A673 (cell line): ENCODE measurements at regions of chr9 and their contacts with region 1.

Region 1: DNA sequence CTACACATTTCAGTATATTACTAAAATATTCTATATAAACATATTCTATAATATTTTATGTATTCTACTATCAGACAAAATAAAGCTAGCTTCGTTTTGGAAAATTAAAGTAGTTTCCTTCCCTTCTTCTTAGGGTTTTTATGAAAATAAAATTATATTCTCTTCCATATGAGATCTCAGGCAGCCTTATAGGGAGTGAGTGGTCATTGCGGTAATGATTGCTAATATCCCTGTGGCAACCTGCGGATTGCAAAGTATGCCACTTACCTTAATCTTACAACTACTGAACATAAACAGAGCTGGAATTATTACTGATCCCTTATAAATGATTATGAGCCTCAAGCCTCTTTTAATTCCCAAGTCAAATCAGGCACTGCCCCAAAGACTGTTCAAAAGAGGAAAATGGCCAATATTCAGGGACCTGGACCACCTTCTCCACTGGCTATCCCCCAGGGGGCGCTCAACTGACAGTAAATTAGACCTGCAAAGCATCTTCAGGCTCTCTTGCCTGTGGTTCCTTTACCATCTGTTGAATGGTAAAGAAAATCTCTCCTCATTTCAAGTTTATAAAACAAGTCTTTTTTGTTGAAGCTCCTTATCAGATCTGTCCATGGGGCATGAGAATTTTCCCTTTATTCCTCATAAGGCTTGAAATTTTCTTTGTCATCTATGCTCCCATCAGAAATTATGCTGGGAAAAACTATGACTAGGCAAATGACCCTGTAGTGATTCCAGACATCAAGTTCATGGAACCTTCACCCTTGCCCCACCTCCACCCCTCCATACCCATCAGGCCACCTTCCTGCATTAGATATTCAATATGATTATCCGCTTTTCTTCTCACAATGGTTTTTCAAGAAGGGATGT is 163.9 kb downstream of the CEMIP2 start:
- DNase-seq: peak; percentile 71
- H3K4me3 ChIP-seq: no peak overlapping the region
- H3K27ac ChIP-seq: no peak overlapping the region
- H3K4me1 ChIP-seq: no peaks in the 10 kb centered on the region
- H3K27me3 ChIP-seq: no peaks in the 10 kb centered on the region
- CTCF ChIP-seq: peak; percentile 87

Region 2: DNA sequence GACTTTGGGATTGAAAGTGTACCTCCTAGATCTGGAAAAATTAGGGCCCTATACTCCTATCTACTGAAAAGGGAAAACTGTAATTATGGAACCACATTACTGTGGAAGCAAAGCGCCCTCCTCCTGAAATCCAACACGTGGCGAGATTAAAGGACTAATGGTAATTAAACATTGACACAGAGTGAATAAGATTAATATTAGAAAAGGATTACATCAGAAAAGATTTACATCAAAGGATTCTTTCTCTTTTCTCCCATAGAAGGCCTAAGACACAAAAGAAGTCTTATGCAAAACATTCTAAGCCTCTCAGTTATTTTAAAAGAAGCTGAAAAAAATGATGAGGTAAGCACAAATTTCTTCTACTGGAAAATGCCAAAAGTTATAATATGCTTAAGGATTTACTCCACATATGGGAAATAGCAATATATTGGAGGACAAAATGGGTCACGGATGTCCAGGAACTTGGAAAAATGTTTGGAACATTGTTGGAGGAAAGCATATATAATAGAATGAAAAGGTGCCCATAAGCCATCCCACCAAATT is 710.8 kb before region 1 on chr9:
- CTCF ChIA-PET with region 1: no interaction called
- POLR2A ChIA-PET with region 1: no interaction called
- intact Hi-C with region 1: no loop called
- DNase-seq: no peak
- H3K4me3 ChIP-seq: no peak overlapping the region
- H3K27ac ChIP-seq: no peak overlapping the region
- H3K4me1 ChIP-seq: no peaks in the 10 kb centered on the region
- H3K27me3 ChIP-seq: no peaks in the 10 kb centered on the region
- CTCF ChIP-seq: no peak

Region 3: DNA sequence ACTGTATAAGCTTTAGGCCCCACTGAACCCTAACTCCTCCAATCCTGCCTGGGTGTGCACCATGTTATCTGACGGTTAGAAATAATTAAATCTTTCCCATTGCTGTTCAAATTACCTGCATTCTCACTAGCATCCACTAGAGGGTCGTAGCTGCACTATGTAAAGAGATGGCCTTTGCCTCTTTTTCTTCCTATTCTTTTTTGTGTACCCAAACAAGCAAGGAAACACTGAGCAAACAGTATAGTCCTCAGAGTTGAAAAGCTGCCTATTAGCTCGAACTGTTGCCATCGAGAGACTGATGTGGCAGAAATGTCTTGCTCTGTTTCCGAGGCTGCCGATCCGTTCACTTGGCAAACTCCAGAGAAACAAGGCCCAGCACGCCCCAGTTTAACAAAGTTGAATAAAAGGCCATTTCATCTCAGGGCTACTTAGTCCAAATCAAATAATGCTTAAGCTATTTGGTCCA is 319.2 kb before region 1 on chr9:
- CTCF ChIA-PET with region 1: no interaction called
- POLR2A ChIA-PET with region 1: no interaction called
- intact Hi-C with region 1: loop called (anchors 5 kb)
- DNase-seq: peak; percentile 72
- H3K4me3 ChIP-seq: no peak overlapping the region
- H3K27ac ChIP-seq: no peak overlapping the region
- H3K4me1 ChIP-seq: no peaks in the 10 kb centered on the region
- H3K27me3 ChIP-seq: no peaks in the 10 kb centered on the region
- CTCF ChIP-seq: peak; percentile 80

Region 4: GRCh38 chr9:71353720-71354119 is 250.7 kb before region 1 on chr9:
- CTCF ChIA-PET with region 1: no interaction called
- POLR2A ChIA-PET with region 1: no interaction called
- intact Hi-C with region 1: no loop called
- DNase-seq: no peak
- H3K4me3 ChIP-seq: no peak overlapping the region
- H3K27ac ChIP-seq: no peak overlapping the region
- H3K4me1 ChIP-seq: no peaks in the 10 kb centered on the region
- H3K27me3 ChIP-seq: no peaks in the 10 kb centered on the region
- CTCF ChIP-seq: no peak

Region 5: DNA sequence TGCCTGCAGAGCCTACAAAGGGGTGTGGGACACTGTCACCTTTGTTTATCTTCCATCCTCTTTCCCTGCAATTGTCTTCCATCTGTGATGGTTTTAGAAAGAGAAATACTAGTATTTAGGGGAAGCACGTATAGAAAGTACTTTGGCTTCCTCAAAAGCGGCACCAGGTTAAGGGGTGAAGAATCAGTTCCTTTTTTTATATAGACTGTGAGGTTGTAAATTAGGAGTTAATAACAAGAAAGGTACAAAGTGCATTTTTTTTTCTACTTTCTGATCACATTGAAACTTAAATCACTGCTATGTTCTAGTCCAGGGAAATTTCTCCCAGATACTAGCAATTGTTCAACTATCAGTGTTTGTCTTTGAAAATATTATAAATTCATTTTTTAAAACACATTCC is 55.4 kb before region 1 on chr9:
- CTCF ChIA-PET with region 1: no interaction called
- POLR2A ChIA-PET with region 1: no interaction called
- intact Hi-C with region 1: no loop called
- DNase-seq: no peak
- H3K4me3 ChIP-seq: no peak overlapping the region
- H3K27ac ChIP-seq: no peak overlapping the region
- H3K4me1 ChIP-seq: no peaks in the 10 kb centered on the region
- H3K27me3 ChIP-seq: peaks cover 62% of the 10 kb centered on the region
- CTCF ChIP-seq: no peak

Region 6: DNA sequence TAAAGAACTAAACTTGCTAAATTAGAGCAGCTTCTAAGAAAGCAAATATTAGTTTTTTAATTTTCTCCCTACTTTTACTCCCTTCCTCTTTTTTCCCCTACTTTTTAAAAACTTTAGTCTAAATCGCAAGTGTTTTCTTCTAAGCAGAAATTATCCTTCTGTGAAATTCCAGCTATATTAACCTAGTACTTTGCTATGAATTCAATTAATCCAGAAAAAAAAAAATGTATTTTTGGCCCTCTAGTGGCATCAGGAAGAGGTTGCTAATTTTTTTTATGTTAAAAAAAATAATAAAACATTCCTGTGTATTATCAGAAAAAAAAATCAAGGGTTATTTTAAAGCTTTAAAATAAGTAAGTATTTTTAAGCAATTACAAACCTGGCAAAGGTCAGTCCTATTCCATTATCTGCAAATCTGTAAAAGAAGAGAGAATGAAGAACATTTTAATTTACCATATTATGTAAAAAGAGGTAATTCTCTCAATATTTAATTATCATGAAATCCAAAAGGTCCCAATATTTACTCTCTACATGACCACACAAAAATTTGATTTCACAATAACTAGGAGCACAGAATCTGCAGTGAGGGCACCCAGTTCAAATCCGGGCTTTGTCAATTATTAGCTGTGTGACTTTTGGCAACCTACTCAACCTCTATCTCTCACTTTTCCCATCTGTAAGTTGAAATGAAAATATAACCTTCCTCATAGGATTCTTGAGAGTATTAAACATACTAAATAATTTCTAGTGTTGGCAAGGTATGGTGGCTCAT is 111.9 kb after region 1 on chr9:
- CTCF ChIA-PET with region 1: no interaction called
- POLR2A ChIA-PET with region 1: no interaction called
- intact Hi-C with region 1: loop called (anchors 10 kb)
- DNase-seq: peak; percentile 10
- H3K4me3 ChIP-seq: no peak overlapping the region
- H3K27ac ChIP-seq: no peak overlapping the region
- H3K4me1 ChIP-seq: no peaks in the 10 kb centered on the region
- H3K27me3 ChIP-seq: no peaks in the 10 kb centered on the region
- CTCF ChIP-seq: peak; percentile 64

Region 7: DNA sequence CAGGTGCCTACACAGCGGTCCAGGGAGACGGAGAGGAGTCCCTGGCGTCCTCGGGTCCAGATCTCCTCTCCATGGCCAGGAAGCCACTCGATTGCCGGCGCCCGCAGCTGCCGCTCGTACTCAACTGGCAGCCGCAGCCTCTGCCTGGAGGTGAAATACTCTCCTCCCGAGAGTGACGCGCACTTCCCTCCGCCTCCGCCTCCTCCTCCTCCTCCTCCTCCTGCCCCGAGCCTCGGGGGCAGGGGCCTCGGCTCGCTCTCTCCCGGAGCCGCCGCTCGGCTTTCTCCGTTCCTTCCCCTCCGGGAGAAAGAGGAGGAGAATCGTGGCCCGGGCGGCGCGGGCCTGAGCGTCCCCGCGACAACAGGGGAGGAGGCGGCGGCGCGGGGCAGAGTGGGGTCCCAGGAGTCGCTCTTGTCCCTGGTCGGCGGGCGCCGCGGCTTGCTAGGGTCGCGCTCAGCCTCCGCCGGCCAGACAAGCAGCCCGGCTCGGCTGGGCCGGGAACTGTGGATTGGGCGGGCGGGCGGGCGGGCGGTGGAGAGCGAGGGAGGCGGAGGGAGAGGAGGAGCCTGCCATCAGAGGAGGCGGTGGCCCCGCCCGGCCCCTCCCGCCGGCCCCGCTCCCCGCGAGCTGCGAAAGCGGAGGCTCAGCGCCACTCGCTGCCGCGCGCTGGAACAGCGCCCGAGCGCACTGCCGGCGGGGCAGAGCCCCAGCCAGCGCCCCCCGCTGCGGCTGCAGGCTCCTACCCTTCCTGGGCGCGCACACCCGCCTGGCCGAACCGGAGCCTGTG is 164.2 kb after region 1 on chr9 and contains the start of gene CEMIP2:
- CTCF ChIA-PET with region 1: no interaction called
- POLR2A ChIA-PET with region 1: no interaction called
- intact Hi-C with region 1: loop called (anchors 1 kb)
- DNase-seq: peak; percentile 91
- H3K4me3 ChIP-seq: peak within 1 kb of the TSS; percentile 74
- H3K27ac ChIP-seq: peak within 1 kb of the TSS; percentile 86
- H3K4me1 ChIP-seq: peaks cover 45% of the 10 kb centered on the region
- H3K27me3 ChIP-seq: no peaks in the 10 kb centered on the region
- CTCF ChIP-seq: peak; percentile 42; the same call in 1 of the 2 replicates
- total RNA-seq, gene CEMIP2: 31.8 and 32.9 TPM in 2 replicates

Region 8: DNA sequence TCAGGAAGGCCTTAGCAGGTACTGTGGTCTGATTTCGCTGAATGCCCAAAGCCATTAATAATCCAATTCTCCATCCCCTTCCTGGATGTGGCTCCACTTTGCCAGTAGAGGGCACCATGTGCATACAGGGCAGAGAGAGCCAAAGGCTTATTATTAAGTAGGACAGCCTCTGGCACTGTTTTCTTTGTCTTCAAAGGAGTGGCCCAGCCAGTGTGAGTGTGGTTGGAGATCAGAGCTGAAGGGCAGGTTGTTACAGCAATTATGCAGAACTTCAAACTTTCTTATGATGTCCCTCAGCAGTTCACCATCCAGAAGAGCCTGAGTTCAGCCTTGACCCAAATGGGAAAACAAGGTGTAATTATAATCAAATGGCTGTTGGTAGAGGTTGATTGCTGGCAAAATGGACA is 202.5 kb after region 1 on chr9:
- CTCF ChIA-PET with region 1: no interaction called
- POLR2A ChIA-PET with region 1: no interaction called
- intact Hi-C with region 1: loop called (anchors 2 kb)
- DNase-seq: peak; percentile 84
- H3K4me3 ChIP-seq: no peak overlapping the region
- H3K27ac ChIP-seq: no peak overlapping the region
- H3K4me1 ChIP-seq: no peaks in the 10 kb centered on the region
- H3K27me3 ChIP-seq: no peaks in the 10 kb centered on the region
- CTCF ChIP-seq: peak; percentile 95

Region 9: DNA sequence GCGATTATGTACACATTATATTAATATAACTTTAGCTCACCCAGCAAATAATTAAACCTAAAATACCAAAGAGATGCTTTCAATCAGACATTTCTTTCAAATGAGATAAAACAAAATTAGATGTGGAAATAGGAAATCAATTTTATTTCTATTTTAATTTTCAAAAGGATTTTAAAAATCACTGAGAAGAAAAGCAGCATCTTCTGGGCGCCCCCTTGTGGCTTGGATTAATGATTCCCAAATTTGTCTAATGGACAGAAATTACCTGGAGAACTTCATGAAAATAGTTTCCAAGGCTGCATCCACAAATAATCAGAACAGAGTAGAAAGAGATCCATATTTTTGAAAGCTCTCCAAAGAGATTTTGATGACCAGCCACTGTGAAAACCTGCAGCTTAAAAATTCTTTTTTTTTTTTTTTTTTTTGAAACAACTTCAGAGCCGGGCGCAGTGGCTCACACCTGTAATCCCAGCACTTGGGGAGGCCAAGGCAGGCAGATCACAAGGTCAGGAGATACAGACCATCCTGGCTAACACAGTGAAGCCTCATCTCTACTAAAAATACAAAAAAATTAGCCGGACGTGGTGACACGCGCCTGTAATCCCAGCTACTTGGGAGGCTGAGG is 214.8 kb after region 1 on chr9:
- CTCF ChIA-PET with region 1: no interaction called
- POLR2A ChIA-PET with region 1: no interaction called
- intact Hi-C with region 1: loop called (anchors 2 kb)
- DNase-seq: peak; percentile 34
- H3K4me3 ChIP-seq: no peak overlapping the region
- H3K27ac ChIP-seq: no peak overlapping the region
- H3K4me1 ChIP-seq: no peaks in the 10 kb centered on the region
- H3K27me3 ChIP-seq: no peaks in the 10 kb centered on the region
- CTCF ChIP-seq: peak; percentile 83

Region 10: GRCh38 chr9:72022841-72023240 is 418.4 kb after region 1 on chr9:
- CTCF ChIA-PET with region 1: no interaction called
- POLR2A ChIA-PET with region 1: no interaction called
- intact Hi-C with region 1: loop called (anchors 5 kb)
- DNase-seq: no peak
- H3K4me3 ChIP-seq: no peak overlapping the region
- H3K27ac ChIP-seq: no peak overlapping the region
- H3K4me1 ChIP-seq: no peaks in the 10 kb centered on the region
- H3K27me3 ChIP-seq: no peaks in the 10 kb centered on the region
- CTCF ChIP-seq: no peak

Region 11: DNA sequence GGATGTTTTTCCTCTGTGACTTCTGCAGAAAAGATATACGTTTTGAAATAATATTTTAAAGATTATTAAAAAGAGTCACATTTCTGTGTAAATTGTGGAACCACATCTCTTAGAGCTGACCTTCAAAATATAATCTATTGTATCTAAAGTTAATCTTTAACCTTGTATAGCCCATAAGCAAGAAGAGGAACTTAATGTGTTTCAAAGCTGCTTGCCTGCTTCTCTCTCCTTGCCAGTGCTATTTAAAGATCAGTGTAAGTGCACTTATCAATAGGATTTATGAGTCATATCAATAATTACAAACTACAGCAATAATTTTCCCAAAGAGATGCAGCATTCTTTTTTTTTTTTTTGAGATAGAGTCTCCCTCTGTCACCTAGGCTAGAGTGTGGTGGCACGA is 515.4 kb after region 1 on chr9:
- CTCF ChIA-PET with region 1: no interaction called
- POLR2A ChIA-PET with region 1: no interaction called
- intact Hi-C with region 1: no loop called
- DNase-seq: no peak
- H3K4me3 ChIP-seq: no peak overlapping the region
- H3K27ac ChIP-seq: no peak overlapping the region
- H3K4me1 ChIP-seq: no peaks in the 10 kb centered on the region
- H3K27me3 ChIP-seq: no peaks in the 10 kb centered on the region
- CTCF ChIP-seq: no peak